CD8-positive, alpha-beta memory T cell (primary cell): ENCODE measurements at regions of chr5 and their contacts with region 1.

Region 1: GRCh38 chr5:151126199-151126645 is 31.4 kb downstream of the ANXA6 start:
- DNase-seq: peak; percentile 52 to 75 (median 57)
- H3K4me3 ChIP-seq: no peak overlapping the region
- H3K4me3 Mint-ChIP-seq: peak overlapping the region in 1 of 7 donors; percentile 2
- H3K27ac ChIP-seq: no peak overlapping the region
- H3K27ac Mint-ChIP-seq: peak overlapping the region; percentile 10 to 95 (median 76)
- H3K4me1 ChIP-seq: peaks cover 15% of the 10 kb centered on the region
- H3K4me1 Mint-ChIP-seq: peaks cover 30 to 61% (median 51%) of the 10 kb centered on the region in 3 donors
- H3K27me3 ChIP-seq: no peaks in the 10 kb centered on the region
- H3K27me3 Mint-ChIP-seq: no peaks in the 10 kb centered on the region

Region 2: GRCh38 chr5:150778517-150779396 is 347.5 kb before region 1 on chr5 and contains the start of gene SMIM3:
- CTCF ChIA-PET with region 1: no interaction called
- POLR2A ChIA-PET with region 1: no interaction called
- DNase-seq: peak; percentile 32 to 76 (median 48)
- H3K4me3 ChIP-seq: peak within 1 kb of the TSS; percentile 67
- H3K4me3 Mint-ChIP-seq: peak within 1 kb of the TSS; percentile 89 to 98 (median 95)
- H3K27ac ChIP-seq: peak within 1 kb of the TSS; percentile 59
- H3K27ac Mint-ChIP-seq: peak within 1 kb of the TSS; percentile 86 to 95 (median 92)
- H3K4me1 ChIP-seq: peaks cover 41% of the 10 kb centered on the region
- H3K4me1 Mint-ChIP-seq: peaks cover 51 to 63% (median 56%) of the 10 kb centered on the region in 3 donors
- H3K27me3 ChIP-seq: no peaks in the 10 kb centered on the region
- H3K27me3 Mint-ChIP-seq: peaks cover 6 to 7% of the 10 kb centered on the region in 2 donors
- total RNA-seq, gene SMIM3: 11.8 to 12.7 TPM

Region 3: DNA sequence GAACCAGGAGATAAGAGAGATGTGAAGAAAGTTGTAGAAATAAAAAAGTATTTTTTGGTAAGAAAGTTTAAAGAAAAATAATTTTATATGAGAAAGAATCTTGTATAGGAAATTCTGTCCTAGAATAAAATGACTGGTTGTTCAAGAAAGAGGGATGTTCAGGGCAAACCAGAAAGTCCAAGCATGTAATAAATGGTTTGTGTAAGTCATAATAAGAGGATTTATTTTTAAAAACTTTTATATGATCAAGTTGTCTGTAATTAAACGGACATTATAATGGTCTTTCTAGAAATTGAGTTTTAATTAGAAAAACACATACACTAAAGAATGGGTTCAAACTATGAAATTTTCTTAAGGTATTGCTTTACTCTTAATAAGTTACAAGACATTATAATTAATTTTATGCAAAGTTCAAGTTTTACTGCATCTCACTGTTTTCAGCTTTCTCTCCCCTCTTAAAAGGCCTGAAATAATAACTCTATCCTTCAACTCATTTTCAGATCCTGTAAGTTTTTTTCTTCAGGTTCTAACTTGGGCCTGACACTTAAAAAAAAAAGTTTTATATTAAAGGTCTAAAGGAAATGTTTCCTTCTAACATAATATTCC is 165.3 kb before region 1 on chr5:
- CTCF ChIA-PET with region 1: no interaction called
- POLR2A ChIA-PET with region 1: no interaction called
- DNase-seq: no peak
- H3K4me3 ChIP-seq: no peak overlapping the region
- H3K4me3 Mint-ChIP-seq: no peak overlapping the region
- H3K27ac ChIP-seq: no peak overlapping the region
- H3K27ac Mint-ChIP-seq: no peak overlapping the region
- H3K4me1 ChIP-seq: no peaks in the 10 kb centered on the region
- H3K4me1 Mint-ChIP-seq: peaks cover 0 to 5% (median 4%) of the 10 kb centered on the region in 3 donors
- H3K27me3 ChIP-seq: no peaks in the 10 kb centered on the region
- H3K27me3 Mint-ChIP-seq: peaks cover 10 to 21% of the 10 kb centered on the region in 2 donors

Region 4: GRCh38 chr5:150989695-150990094 is 136.5 kb before region 1 on chr5:
- CTCF ChIA-PET with region 1: no interaction called
- POLR2A ChIA-PET with region 1: no interaction called
- DNase-seq: no peak
- H3K4me3 ChIP-seq: no peak overlapping the region
- H3K4me3 Mint-ChIP-seq: no peak overlapping the region
- H3K27ac ChIP-seq: no peak overlapping the region
- H3K27ac Mint-ChIP-seq: no peak overlapping the region
- H3K4me1 ChIP-seq: no peaks in the 10 kb centered on the region
- H3K4me1 Mint-ChIP-seq: no peaks in the 10 kb centered on the region
- H3K27me3 ChIP-seq: no peaks in the 10 kb centered on the region
- H3K27me3 Mint-ChIP-seq: no peaks in the 10 kb centered on the region

Region 5: DNA sequence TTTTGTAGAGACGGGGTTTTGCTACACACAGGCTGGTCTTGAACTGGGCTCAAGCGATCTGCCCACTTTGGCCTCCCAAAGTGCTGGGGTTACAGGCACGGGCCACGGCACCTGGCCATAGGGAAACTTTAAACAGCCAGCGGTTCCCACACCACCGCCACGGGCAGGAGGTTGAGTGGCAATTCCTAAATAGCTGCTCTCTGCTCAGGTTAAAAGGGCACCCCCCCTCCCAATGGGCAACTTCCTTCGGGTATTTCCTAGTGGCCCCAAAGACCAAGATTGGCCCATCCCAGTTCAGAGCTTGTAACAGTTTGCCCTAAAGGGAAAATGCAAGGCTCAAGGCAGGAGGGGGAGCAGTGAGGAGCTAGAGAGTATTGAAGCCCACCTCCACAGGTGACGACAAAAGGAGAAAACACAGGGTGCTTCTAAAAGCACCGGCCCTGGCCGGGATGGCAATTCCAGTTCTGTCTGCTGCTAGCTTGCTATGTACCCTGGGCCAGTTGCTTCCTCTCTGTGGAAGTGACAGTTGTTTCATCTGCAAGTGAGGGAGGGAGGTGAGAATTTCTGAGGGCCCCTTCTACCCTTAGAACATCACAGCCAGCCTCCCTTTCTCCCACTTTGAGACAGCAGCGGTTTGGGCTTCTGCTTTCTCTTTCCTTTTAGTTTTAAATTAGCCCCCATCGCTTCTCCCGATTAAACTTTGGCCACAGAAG is 28.3 kb before region 1 on chr5:
- CTCF ChIA-PET with region 1: interaction called, 10 read pairs
- POLR2A ChIA-PET with region 1: interaction called, 3 read pairs
- DNase-seq: peak in 4 of 5 donors; percentile 18 to 64 (median 42)
- H3K4me3 ChIP-seq: no peak overlapping the region
- H3K4me3 Mint-ChIP-seq: peak overlapping the region; percentile 7 to 87 (median 74)
- H3K27ac ChIP-seq: peak overlapping the region; percentile 14
- H3K27ac Mint-ChIP-seq: peak overlapping the region; percentile 81 to 97 (median 92)
- H3K4me1 ChIP-seq: peaks cover 61% of the 10 kb centered on the region
- H3K4me1 Mint-ChIP-seq: peaks cover 65 to 84% (median 77%) of the 10 kb centered on the region in 3 donors
- H3K27me3 ChIP-seq: no peaks in the 10 kb centered on the region
- H3K27me3 Mint-ChIP-seq: peaks cover 0 to 4% of the 10 kb centered on the region in 2 donors

Region 6: GRCh38 chr5:151150471-151151262 is 24.4 kb after region 1 on chr5:
- CTCF ChIA-PET with region 1: interaction called, 68 read pairs
- POLR2A ChIA-PET with region 1: interaction called, 9 read pairs
- DNase-seq: peak; percentile 58 to 91 (median 77)
- H3K4me3 ChIP-seq: peak overlapping the region; percentile 35
- H3K4me3 Mint-ChIP-seq: peak overlapping the region; percentile 51 to 85 (median 74)
- H3K27ac ChIP-seq: peak overlapping the region; percentile 64
- H3K27ac Mint-ChIP-seq: peak overlapping the region; percentile 92 to 99 (median 97)
- H3K4me1 ChIP-seq: peaks cover 98% of the 10 kb centered on the region
- H3K4me1 Mint-ChIP-seq: peaks cover 97 to 100% (median 99%) of the 10 kb centered on the region in 3 donors
- H3K27me3 ChIP-seq: no peaks in the 10 kb centered on the region
- H3K27me3 Mint-ChIP-seq: no peaks in the 10 kb centered on the region

Region 7: DNA sequence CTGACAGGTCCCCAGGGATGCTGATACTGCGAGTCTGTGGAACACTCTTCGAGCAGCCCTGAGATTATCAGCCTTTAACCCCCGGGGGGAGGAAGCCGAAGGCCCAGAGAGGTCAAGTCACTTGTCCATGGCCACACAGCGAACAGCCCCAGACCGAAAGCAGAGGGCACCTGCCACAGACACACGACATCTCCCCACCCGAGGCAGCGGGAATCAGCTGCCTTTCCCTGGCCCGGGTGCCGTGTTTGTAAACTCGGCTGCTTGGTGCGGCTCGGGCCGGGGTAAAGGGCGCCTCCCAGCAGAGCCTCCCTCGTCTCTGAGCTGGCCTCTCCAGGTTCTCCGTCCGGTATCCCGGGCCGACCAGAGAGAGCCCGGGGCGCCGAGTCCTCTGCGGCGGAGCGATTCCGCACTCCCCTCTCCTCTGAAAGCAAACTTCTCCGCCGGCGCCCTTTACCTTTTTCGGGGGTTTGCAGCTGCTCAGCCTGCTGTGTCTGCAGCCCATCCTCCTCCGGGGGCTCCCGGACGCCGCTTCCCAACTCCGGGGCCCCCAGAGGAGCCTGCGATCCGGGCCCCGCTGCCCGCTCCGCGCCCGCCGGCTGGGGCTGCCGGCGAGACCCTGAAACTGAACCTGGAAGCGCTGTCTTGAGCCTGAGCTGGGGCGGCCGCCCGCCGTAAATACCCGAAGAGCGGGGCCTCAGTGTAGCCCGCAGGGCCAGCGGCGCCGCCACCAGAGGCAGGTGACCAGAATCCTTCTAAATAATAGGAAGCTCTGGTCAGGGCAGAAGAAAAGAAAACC is 97.4 kb after region 1 on chr5 and contains the start of gene CCDC69:
- CTCF ChIA-PET with region 1: interaction called, 17 read pairs
- POLR2A ChIA-PET with region 1: no interaction called
- DNase-seq: peak; percentile 28 to 69 (median 47)
- H3K4me3 ChIP-seq: peak within 1 kb of the TSS; percentile 92
- H3K4me3 Mint-ChIP-seq: peak within 1 kb of the TSS; percentile 80 to 98 (median 89)
- H3K27ac ChIP-seq: peak within 1 kb of the TSS; percentile 86
- H3K27ac Mint-ChIP-seq: peak within 1 kb of the TSS; percentile 91 to 99 (median 96)
- H3K4me1 ChIP-seq: peaks cover 63% of the 10 kb centered on the region
- H3K4me1 Mint-ChIP-seq: peaks cover 55 to 61% (median 59%) of the 10 kb centered on the region in 3 donors
- H3K27me3 ChIP-seq: no peaks in the 10 kb centered on the region
- H3K27me3 Mint-ChIP-seq: no peaks in the 10 kb centered on the region
- total RNA-seq, gene CCDC69: 47.9 to 50.5 TPM